Common myeloid progenitor, CD34-positive (primary cell): ENCODE measurements at regions of chr11 and their contacts with region 1.

Region 1: DNA sequence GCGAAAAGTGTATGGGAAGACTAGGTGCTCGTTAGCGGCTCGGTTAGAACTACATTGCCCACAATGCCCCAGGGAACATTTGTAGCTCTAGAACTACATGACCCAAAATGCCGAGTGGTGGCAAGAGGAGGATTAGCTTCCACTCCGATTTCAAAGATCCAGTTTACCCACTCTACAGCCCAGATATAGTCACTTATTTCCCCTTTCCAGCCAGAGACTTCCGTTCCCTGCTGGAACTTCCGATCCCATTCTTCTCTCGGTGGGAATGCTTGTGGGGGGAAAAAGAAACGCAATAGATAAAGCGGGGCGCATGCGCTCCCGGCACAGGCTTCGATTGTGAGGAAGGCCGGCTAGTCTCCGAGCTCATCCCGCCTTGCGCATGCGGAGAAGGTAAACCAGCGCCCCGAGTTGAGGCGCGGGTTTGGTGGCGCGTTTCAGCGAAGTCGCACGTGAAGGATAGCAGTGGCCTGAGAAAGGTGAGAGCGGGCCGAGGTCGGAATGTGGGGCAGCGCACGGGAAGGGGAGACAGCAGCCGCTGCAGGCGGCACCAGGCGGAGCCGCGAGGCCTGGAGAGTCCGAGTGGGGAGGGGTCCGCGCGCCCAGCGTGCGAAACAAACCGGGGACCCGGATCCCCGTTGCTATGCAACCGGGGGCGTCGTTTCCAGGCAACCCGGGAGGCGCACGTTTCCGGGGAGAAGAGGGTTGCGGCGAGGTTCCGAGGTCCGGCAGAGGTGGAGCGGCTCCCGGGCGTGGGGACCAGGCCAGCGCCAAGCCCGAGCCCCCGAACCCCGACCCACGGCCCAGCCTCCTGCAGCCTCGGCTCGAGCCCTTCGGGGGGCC is at the start of gene TMEM109:
- DNase-seq: peak; percentile 78 to 89 (median 83)
- H3K4me3 ChIP-seq: peak within 1 kb of the TSS; percentile 50 to 98 (median 92)
- H3K27ac ChIP-seq: peak within 1 kb of the TSS; percentile 62 to 92
- H3K4me1 ChIP-seq: peaks cover 23 to 46% (median 39%) of the 10 kb centered on the region in 4 experiments
- H3K27me3 ChIP-seq: no peaks in the 10 kb centered on the region

Region 2: DNA sequence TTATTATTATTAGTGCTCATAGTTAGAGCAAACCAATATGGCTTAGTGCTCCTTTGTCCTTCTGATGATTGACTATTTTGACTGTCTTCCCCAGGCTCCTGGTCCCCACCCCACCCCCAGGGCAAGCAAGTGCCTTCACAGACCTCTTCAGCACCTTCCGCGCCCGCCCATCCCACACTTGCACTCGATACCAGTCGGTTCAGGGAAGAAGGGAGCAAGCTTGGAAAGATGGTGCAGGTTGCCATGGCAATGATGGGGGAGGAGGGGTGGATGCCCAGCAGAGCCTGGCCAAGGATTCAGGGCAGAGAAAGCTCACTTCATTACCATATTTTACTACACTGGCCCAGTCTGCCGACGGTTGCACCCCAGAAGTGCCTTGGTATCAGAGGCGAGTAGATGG is 12.5 kb after region 1 on chr11:
- CTCF ChIA-PET with region 1: interaction called, 11 read pairs
- POLR2A ChIA-PET with region 1: interaction called, 3 read pairs
- DNase-seq: no peak
- H3K4me3 ChIP-seq: no peak overlapping the region
- H3K27ac ChIP-seq: no peak overlapping the region
- H3K4me1 ChIP-seq: peaks cover 0 to 16% (median 16%) of the 10 kb centered on the region in 4 experiments
- H3K27me3 ChIP-seq: peaks cover 0 to 55% (median 30%) of the 10 kb centered on the region in 5 experiments

Region 3: DNA sequence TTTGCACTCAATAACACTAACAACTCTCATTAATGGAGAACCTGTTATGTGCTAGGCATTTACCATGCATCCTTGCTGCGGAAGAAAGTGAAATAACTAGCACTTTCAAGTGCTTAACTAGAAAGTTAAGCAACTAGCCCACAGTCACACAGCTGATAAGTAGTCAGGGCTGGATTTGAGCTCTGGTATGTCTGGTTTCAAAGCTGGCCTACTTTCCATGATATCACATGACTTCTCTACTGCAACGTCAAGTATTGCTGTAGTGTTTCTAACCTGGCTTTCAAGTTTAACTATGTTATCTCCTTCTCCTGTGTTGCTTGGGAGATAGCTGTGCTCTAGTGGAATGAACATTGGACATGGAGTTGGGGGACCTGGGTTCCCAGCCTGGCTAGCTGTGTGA is 25.8 kb after region 1 on chr11:
- CTCF ChIA-PET with region 1: interaction called, 12 read pairs
- POLR2A ChIA-PET with region 1: no interaction called
- DNase-seq: no peak
- H3K4me3 ChIP-seq: no peak overlapping the region
- H3K27ac ChIP-seq: no peak overlapping the region
- H3K4me1 ChIP-seq: no peaks in the 10 kb centered on the region
- H3K27me3 ChIP-seq: peaks cover 0 to 11% (median 5%) of the 10 kb centered on the region in 5 experiments

Region 4: GRCh38 chr11:60978546-60979380 is 64.8 kb after region 1 on chr11:
- CTCF ChIA-PET with region 1: no interaction called
- POLR2A ChIA-PET with region 1: no interaction called
- DNase-seq: no peak
- H3K4me3 ChIP-seq: no peak overlapping the region
- H3K27ac ChIP-seq: no peak overlapping the region
- H3K4me1 ChIP-seq: peaks cover 0 to 9% (median 0%) of the 10 kb centered on the region in 4 experiments
- H3K27me3 ChIP-seq: no peaks in the 10 kb centered on the region